Activated T-helper 1 cell treated with anti-CD3 and anti-CD28 coated beads, Interleukin-12 subunit alpha, Interleukin-12 subunit beta, Interleukin-2, Interleukin-4 antibody, amounts not matched to agents 30 ng/mL and 10 ng/mL and 1 ng/mL, durations not matched to agents 14 hours and 24 hours and 36 hours (primary cell): ENCODE measurements at regions of chr20 and their contacts with region 1.

Region 1: GRCh38 chr20:58980700-58981627 is at the start of gene NELFCD:
- DNase-seq: peak; percentile 86
- H3K4me3 Mint-ChIP-seq: peak within 1 kb of the TSS; percentile 94
- H3K27ac Mint-ChIP-seq: peak within 1 kb of the TSS; percentile 91
- H3K4me1 Mint-ChIP-seq: peaks cover 21% of the 10 kb centered on the region
- H3K27me3 Mint-ChIP-seq: peaks cover 12% of the 10 kb centered on the region
- total RNA-seq, gene NELFCD: 121 and 135 TPM in 2 replicates

Region 2: GRCh38 chr20:57718490-57719271 is 1262.3 kb before region 1 on chr20:
- intact Hi-C with region 1: loop called (anchors 5 kb)
- DNase-seq: peak; percentile 78
- H3K4me3 Mint-ChIP-seq: peak overlapping the region; percentile 22
- H3K27ac Mint-ChIP-seq: no peak overlapping the region
- H3K4me1 Mint-ChIP-seq: no peaks in the 10 kb centered on the region
- H3K27me3 Mint-ChIP-seq: peaks cover 23% of the 10 kb centered on the region

Region 3: GRCh38 chr20:58388882-58389323 is 592.1 kb before region 1 on chr20 and contains the start of gene VAPB:
- intact Hi-C with region 1: loop called (anchors 1 kb)
- DNase-seq: peak; percentile 97
- H3K4me3 Mint-ChIP-seq: peak within 1 kb of the TSS; percentile 99
- H3K27ac Mint-ChIP-seq: peak within 1 kb of the TSS; percentile 96
- H3K4me1 Mint-ChIP-seq: peaks cover 39% of the 10 kb centered on the region
- H3K27me3 Mint-ChIP-seq: peaks cover 10% of the 10 kb centered on the region
- total RNA-seq, gene VAPB: 39.7 and 40.9 TPM in 2 replicates

Region 4: GRCh38 chr20:58907399-58908137 is 73.4 kb before region 1 on chr20:
- intact Hi-C with region 1: loop called (anchors 5 kb)
- DNase-seq: peak; percentile 48
- H3K4me3 Mint-ChIP-seq: peak overlapping the region; percentile 81
- H3K27ac Mint-ChIP-seq: peak overlapping the region; percentile 95
- H3K4me1 Mint-ChIP-seq: peaks cover 56% of the 10 kb centered on the region
- H3K27me3 Mint-ChIP-seq: no peaks in the 10 kb centered on the region

Region 5: GRCh38 chr20:59032023-59032712 is 51.2 kb after region 1 on chr20 and contains the start of gene ATP5F1E:
- intact Hi-C with region 1: loop called (anchors 1 kb)
- DNase-seq: peak; percentile 96
- H3K4me3 Mint-ChIP-seq: peak within 1 kb of the TSS; percentile 90
- H3K27ac Mint-ChIP-seq: peak within 1 kb of the TSS; percentile 94
- H3K4me1 Mint-ChIP-seq: peaks cover 60% of the 10 kb centered on the region
- H3K27me3 Mint-ChIP-seq: no peaks in the 10 kb centered on the region
- total RNA-seq, gene ATP5F1E: 81.3 and 84.6 TPM in 2 replicates

Region 6: GRCh38 chr20:59165891-59166709 is 185.1 kb after region 1 on chr20:
- intact Hi-C with region 1: loop called (anchors 2 kb)
- DNase-seq: no peak
- H3K4me3 Mint-ChIP-seq: peak overlapping the region; percentile 88
- H3K27ac Mint-ChIP-seq: peak overlapping the region; percentile 98
- H3K4me1 Mint-ChIP-seq: peaks cover 88% of the 10 kb centered on the region
- H3K27me3 Mint-ChIP-seq: no peaks in the 10 kb centered on the region